ENCODE measurements at regions of chr14 and their contacts with region 1.

Region 1: GRCh38 chr14:23555882-23556699 is at the start of gene THTPA:
- DNase-seq: no peak
- ATAC-seq: peak; percentile 89
- H3K4me3 ChIP-seq: peak within 1 kb of the TSS; percentile 75 to 90
- H3K27ac ChIP-seq: peak within 1 kb of the TSS; percentile 89
- H3K4me1 ChIP-seq: no peaks in the 10 kb centered on the region
- H3K27me3 ChIP-seq: no peaks in the 10 kb centered on the region
- CTCF ChIP-seq: no peak
- total RNA-seq, gene THTPA: 13.3 TPM

Region 2: DNA sequence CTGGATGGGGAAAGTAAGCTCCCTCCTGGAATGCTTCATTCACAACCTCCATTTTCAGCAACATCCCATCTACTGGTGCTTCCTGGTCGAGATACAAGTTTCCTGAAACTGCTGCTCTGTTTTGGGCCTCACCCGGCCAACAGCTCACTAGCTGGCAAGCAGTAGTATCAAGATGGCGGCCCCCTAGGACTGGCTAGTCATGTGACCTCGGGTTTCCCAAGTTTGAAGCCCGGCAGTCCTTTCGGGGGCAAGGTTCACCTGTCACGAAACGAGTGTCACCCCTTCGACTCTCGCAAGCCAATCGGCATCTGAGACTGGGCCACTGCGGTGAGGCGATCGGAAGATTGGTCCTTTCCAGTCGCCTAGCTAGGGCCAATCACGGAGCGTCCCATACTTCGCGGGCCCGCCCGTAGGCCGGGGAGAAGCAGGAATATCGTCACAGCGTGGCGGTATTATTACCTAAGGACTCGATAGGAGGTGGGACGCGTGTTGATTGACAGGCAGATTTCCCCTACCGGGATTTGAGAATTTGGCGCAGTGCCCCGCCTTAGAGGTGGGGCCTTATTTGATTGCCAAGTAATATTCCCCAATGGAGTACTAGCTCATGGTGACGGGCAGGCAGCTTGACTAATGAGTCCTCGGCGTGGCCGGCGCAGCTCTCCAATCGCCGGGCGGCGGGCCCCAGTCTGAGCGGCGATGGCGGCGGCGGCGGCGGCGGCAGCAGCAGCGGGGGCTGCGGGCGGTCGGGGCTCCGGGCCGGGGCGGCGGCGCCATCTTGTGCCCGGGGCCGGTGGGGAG is 235.1 kb before region 1 on chr14 and contains the start of gene PABPN1:
- CTCF ChIA-PET with region 1: no interaction called
- POLR2A ChIA-PET with region 1: no interaction called
- in situ Hi-C with region 1: no loop called
- intact Hi-C with region 1: loop called (anchors 10 kb)
- DNase-seq: peak; percentile 97
- ATAC-seq: peak; percentile 95
- H3K4me3 ChIP-seq: peak within 1 kb of the TSS; percentile 93 to 97
- H3K27ac ChIP-seq: peak within 1 kb of the TSS; percentile 95
- H3K4me1 ChIP-seq: peaks cover 7% of the 10 kb centered on the region
- H3K27me3 ChIP-seq: no peaks in the 10 kb centered on the region
- CTCF ChIP-seq: no peak
- total RNA-seq, gene PABPN1: 159 TPM

Region 3: DNA sequence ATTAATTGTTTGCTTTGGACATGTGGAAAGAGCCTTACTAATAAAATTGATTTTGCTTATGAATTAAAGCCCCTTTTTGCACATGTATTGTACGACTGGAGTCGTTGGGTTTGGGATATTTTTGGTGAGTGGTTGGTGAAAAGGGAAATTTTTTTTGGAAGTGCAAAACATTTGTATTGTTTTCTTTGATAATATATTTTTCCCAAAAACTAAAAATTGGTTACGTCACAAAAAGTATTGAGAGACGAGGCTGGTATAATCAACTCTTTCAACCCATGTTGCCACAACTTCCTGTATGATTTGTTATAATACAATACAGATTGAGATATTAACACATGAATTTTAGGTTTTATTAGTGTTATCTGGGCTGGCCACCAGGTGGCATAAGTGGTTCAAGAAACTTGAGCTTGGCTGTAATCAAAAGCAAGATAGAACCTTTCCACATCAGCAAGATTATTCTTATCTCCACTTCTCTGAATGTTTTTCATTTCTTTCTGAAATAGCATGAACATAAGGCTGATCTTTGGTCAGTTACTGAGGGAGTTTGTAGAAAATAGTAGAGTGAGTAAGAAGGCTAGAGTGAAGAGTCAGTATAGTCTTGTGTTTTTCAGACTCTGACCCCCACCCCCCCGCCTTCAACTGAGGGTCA is 77.9 kb before region 1 on chr14:
- CTCF ChIA-PET with region 1: interaction called, 13 read pairs
- POLR2A ChIA-PET with region 1: interaction called, 3 read pairs
- in situ Hi-C with region 1: no loop called
- intact Hi-C with region 1: loop called (anchors 2 kb)
- DNase-seq: peak; percentile 33
- ATAC-seq: no peak
- H3K4me3 ChIP-seq: no peak overlapping the region
- H3K27ac ChIP-seq: no peak overlapping the region
- H3K4me1 ChIP-seq: no peaks in the 10 kb centered on the region
- H3K27me3 ChIP-seq: no peaks in the 10 kb centered on the region
- CTCF ChIP-seq: peak; percentile 60; the same call in 1 of the 2 replicates

Region 4: GRCh38 chr14:23525611-23526010 is 30.5 kb before region 1 on chr14:
- CTCF ChIA-PET with region 1: interaction called, 10 read pairs
- POLR2A ChIA-PET with region 1: interaction called, 3 read pairs
- in situ Hi-C with region 1: no loop called
- intact Hi-C with region 1: no loop called
- DNase-seq: no peak
- ATAC-seq: no peak
- H3K4me3 ChIP-seq: no peak overlapping the region
- H3K27ac ChIP-seq: no peak overlapping the region
- H3K4me1 ChIP-seq: no peaks in the 10 kb centered on the region
- H3K27me3 ChIP-seq: no peaks in the 10 kb centered on the region
- CTCF ChIP-seq: no peak

Measured in Panc1 (cell line).